Common myeloid progenitor, CD34-positive (primary cell): ENCODE measurements at regions of chr14 and their contacts with region 1.

Region 1: GRCh38 chr14:101707068-101707842 is 54.3 kb upstream of the PPP2R5C start:
- DNase-seq: peak; percentile 88 to 94 (median 91)
- H3K4me3 ChIP-seq: no peak overlapping the region
- H3K27ac ChIP-seq: no peak overlapping the region
- H3K4me1 ChIP-seq: peaks cover 0 to 18% (median 13%) of the 10 kb centered on the region in 4 experiments
- H3K27me3 ChIP-seq: peaks cover 5 to 71% (median 23%) of the 10 kb centered on the region in 5 experiments

Region 2: GRCh38 chr14:101639241-101639833 is 67.9 kb before region 1 on chr14:
- CTCF ChIA-PET with region 1: no interaction called
- POLR2A ChIA-PET with region 1: no interaction called
- DNase-seq: no peak
- H3K4me3 ChIP-seq: no peak overlapping the region
- H3K27ac ChIP-seq: no peak overlapping the region
- H3K4me1 ChIP-seq: peaks cover 0 to 14% (median 6%) of the 10 kb centered on the region in 4 experiments
- H3K27me3 ChIP-seq: peaks cover 0 to 2% (median 0%) of the 10 kb centered on the region in 5 experiments

Region 3: GRCh38 chr14:101721951-101722661 is 14.9 kb after region 1 on chr14:
- CTCF ChIA-PET with region 1: interaction called, 10 read pairs
- POLR2A ChIA-PET with region 1: no interaction called
- DNase-seq: peak; percentile 86 to 94 (median 93)
- H3K4me3 ChIP-seq: peak overlapping the region in 1 of 7 experiments; percentile 33
- H3K27ac ChIP-seq: no peak overlapping the region
- H3K4me1 ChIP-seq: peaks cover 5 to 19% (median 15%) of the 10 kb centered on the region in 4 experiments
- H3K27me3 ChIP-seq: peaks cover 0 to 54% (median 33%) of the 10 kb centered on the region in 5 experiments

Region 4: DNA sequence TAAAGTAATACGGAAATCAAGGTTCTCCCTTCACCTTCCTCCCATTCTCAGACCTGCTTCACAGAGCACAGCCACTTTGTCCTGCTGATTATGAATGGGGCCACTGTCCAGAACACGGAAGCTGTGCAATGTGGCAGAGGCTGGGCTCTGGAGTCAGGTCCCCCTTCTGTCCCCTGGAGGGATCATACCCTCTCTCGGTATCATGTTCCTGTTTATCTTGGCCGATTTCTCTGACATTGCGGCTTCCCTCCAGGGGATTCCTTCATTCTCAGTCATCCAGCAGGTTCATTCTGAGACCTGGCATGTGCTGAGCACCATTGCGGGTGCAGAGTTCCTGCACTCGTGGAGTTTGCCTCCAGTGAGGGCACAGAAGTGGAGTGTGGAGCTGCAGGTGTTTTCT is 65.6 kb after region 1 on chr14:
- CTCF ChIA-PET with region 1: interaction called, 26 read pairs
- POLR2A ChIA-PET with region 1: no interaction called
- DNase-seq: no peak
- H3K4me3 ChIP-seq: no peak overlapping the region
- H3K27ac ChIP-seq: no peak overlapping the region
- H3K4me1 ChIP-seq: no peaks in the 10 kb centered on the region
- H3K27me3 ChIP-seq: peaks cover 0 to 4% (median 0%) of the 10 kb centered on the region in 5 experiments

Region 5: GRCh38 chr14:101791919-101792572 is 84.8 kb after region 1 on chr14:
- CTCF ChIA-PET with region 1: no interaction called
- POLR2A ChIA-PET with region 1: no interaction called
- DNase-seq: peak in 2 of 3 donors; percentile 51 to 63
- H3K4me3 ChIP-seq: peak overlapping the region in 2 of 7 experiments; percentile 0 to 63
- H3K27ac ChIP-seq: no peak overlapping the region
- H3K4me1 ChIP-seq: peaks cover 0 to 4% (median 0%) of the 10 kb centered on the region in 4 experiments
- H3K27me3 ChIP-seq: no peaks in the 10 kb centered on the region